ENCODE measurements at regions of chr19 and their contacts with region 1.

Region 1: DNA sequence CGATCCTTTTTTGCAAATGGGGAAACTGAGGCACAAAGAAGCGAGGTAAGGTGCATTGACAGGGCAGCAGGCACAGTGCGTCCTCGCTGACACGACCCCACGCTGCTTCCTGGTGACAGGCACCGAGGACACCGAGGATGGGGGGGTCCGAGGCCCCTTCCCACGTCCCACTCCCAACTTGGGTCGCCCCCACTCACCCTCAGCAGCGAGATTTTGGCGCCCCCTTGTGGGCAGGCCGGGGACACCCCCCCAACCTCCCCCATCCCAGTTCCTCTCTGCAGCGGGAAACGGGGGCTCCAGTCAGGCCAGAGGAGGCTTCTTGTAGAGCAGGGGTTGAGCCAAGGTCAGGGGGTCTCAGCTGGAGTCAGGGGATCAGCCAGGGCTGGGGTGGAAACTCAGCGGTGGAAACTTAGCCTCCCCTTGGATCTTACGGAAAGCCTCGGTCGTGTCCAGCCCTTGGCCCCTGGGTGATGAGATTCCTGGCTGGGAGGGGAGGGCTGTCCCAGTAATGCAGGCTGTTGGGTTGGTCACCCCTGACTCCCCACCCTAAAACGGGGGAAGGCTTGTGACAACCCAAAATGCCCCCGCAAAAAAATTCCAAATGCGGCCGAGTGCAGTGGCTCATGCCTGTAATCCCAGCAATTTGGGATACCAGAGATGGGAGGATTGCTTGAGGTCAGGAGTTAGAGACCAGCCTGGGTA is 8.2 kb downstream of the SMIM24 start:
- DNase-seq: no peak
- ATAC-seq: no peak
- H3K4me3 Mint-ChIP-seq: no peak overlapping the region
- H3K27ac Mint-ChIP-seq: no peak overlapping the region
- H3K4me1 Mint-ChIP-seq: no peaks in the 10 kb centered on the region
- H3K27me3 Mint-ChIP-seq: no peaks in the 10 kb centered on the region
- CTCF ChIP-seq: no peak

Region 2: DNA sequence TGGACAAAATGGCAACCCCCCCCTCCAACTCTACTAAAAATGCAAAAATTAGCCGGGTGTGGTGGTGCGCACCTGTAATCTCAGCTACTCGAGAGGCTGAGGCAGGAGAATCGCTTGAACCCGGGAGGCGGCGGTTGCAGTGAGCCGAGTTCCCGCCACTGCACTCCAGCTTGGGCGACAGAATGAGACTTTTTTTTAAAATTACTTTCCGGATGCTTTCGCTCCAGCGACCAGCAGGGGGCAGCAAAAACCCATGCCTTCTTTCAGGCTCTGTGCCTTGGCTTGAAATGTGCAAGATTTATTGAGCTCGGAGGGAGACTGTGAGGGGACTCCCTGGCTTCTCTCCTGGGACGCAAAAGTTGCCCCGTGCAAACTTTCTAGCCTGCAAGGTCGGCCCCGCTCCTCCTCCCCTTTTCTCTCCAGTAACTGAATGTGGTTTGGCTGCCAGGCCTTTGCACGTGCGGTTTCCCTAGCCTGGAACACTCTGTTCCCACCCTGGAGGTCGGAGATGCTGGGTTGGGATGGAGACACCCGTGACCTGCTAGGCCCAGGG is 167.2 kb before region 1 on chr19:
- CTCF ChIA-PET with region 1: interaction called, 8 read pairs
- POLR2A ChIA-PET with region 1: no interaction called
- intact Hi-C with region 1: loop called (anchors 1 kb)
- DNase-seq: peak; percentile 67
- ATAC-seq: peak; percentile 79
- H3K4me3 Mint-ChIP-seq: no peak overlapping the region
- H3K27ac Mint-ChIP-seq: no peak overlapping the region
- H3K4me1 Mint-ChIP-seq: no peaks in the 10 kb centered on the region
- H3K27me3 Mint-ChIP-seq: peaks cover 21% of the 10 kb centered on the region
- CTCF ChIP-seq: no peak